ENCODE measurements at regions of chr10 and their contacts with region 1.

Region 1: DNA sequence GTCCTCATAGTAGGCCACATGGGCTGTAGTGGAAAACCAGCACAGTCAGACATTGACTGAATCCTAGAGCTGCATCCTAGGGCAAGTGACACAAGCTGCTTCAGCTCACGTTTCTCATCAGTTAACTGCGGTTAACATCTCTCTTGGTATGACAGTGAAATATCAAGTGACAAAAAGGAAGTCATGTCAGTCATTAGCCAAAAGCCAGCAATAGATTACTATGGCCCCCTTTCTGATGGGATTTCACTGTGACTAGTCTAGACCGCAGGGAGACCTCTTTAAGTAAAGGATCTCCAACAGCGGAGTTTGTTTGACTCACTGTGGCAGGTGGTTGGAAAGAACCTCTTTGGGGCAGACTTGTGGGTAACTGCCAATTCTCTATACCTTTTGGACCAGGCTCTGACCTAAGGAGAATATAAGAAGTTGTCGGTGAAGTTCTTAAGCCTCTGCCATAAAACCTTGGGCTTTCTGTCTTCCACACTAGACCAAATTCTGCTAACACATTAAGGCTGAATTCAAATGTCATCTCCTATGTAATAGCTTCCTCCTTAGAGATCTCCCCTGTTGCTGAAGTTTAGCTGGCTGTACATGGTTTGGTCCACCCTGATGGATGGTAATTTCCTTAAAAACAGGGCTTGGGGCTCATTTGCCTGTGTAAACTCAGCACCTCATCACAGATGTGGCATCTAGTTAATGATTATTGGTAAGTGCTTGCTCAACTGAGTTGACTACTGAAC is 115.3 kb downstream of the SGMS1 start:
- DNase-seq: no peak
- ATAC-seq: peak; percentile 80
- H3K4me3 Mint-ChIP-seq: peak overlapping the region; percentile 20
- H3K27ac Mint-ChIP-seq: peak overlapping the region; percentile 61
- H3K4me1 Mint-ChIP-seq: peaks cover 64% of the 10 kb centered on the region
- H3K27me3 Mint-ChIP-seq: no peaks in the 10 kb centered on the region
- CTCF ChIP-seq: no peak

Region 2: GRCh38 chr10:50452603-50453002 is 55.9 kb before region 1 on chr10:
- CTCF ChIA-PET with region 1: no interaction called
- POLR2A ChIA-PET with region 1: no interaction called
- intact Hi-C with region 1: loop called (anchors 2 kb)
- DNase-seq: no peak
- ATAC-seq: peak; percentile 71
- H3K4me3 Mint-ChIP-seq: peak overlapping the region; percentile 12
- H3K27ac Mint-ChIP-seq: peak overlapping the region; percentile 57
- H3K4me1 Mint-ChIP-seq: peaks cover 57% of the 10 kb centered on the region
- H3K27me3 Mint-ChIP-seq: no peaks in the 10 kb centered on the region
- CTCF ChIP-seq: no peak

Region 3: GRCh38 chr10:50470345-50470744 is 38.1 kb before region 1 on chr10:
- CTCF ChIA-PET with region 1: no interaction called
- POLR2A ChIA-PET with region 1: no interaction called
- intact Hi-C with region 1: loop called (anchors 5 kb)
- DNase-seq: no peak
- ATAC-seq: no peak
- H3K4me3 Mint-ChIP-seq: no peak overlapping the region
- H3K27ac Mint-ChIP-seq: no peak overlapping the region
- H3K4me1 Mint-ChIP-seq: peaks cover 42% of the 10 kb centered on the region
- H3K27me3 Mint-ChIP-seq: no peaks in the 10 kb centered on the region
- CTCF ChIP-seq: no peak

Region 4: GRCh38 chr10:50540069-50540825 is 31.8 kb after region 1 on chr10:
- CTCF ChIA-PET with region 1: no interaction called
- POLR2A ChIA-PET with region 1: interaction called, 6 read pairs
- intact Hi-C with region 1: loop called (anchors 2 kb)
- DNase-seq: no peak
- ATAC-seq: peak; percentile 66
- H3K4me3 Mint-ChIP-seq: peak overlapping the region; percentile 54
- H3K27ac Mint-ChIP-seq: peak overlapping the region; percentile 65
- H3K4me1 Mint-ChIP-seq: peaks cover 69% of the 10 kb centered on the region
- H3K27me3 Mint-ChIP-seq: no peaks in the 10 kb centered on the region
- CTCF ChIP-seq: no peak

Region 5: GRCh38 chr10:51272555-51272954 is 764.1 kb after region 1 on chr10:
- CTCF ChIA-PET with region 1: no interaction called
- POLR2A ChIA-PET with region 1: no interaction called
- intact Hi-C with region 1: no loop called
- DNase-seq: no peak
- ATAC-seq: no peak
- H3K4me3 Mint-ChIP-seq: no peak overlapping the region
- H3K27ac Mint-ChIP-seq: no peak overlapping the region
- H3K4me1 Mint-ChIP-seq: no peaks in the 10 kb centered on the region
- H3K27me3 Mint-ChIP-seq: no peaks in the 10 kb centered on the region
- CTCF ChIP-seq: no peak

Measured in activated B cell treated with CpG ODN at 0.5 μM for 24 hours (primary cell).